ENCODE measurements at regions of chr2 and their contacts with region 1.

Region 1: DNA sequence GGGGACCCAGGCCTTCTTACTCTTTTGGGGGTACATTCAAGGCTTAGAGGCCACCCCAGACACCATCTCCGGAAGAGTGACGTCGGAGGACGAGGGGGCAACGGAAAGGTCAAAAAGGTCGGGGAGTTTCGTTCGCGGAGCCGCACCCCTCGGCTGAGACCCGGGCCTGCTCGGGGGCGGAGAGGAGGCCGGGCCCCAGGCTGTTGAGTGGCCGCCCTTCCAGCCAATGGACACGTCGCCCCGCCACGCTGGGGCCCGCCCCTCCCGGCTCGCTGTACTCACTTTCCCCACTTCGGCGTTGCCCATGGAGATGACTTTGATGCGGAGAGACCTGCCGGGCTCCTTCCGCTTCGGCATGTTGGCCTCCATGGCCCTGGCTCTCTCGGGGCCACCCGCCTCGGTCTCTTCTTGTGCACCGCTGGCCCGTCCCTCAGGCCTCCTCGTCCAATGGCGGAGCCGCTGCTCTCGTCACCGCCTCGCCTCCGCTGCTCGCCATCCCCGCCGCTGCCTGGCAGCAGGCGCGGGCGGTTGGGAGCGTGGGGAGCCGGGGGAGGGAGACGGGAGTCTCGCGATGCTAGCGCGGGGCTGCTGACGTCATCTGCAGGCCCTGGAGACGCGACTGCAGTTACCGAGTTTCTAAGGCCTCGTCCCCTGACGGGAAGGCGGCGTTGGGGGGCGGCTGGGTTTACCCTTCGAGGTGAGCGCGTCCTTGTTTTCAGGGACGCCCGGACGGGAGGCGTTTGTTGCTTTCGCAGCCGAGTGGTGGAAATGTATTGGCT is at the start of gene DNAJC27:
- DNase-seq: peak; percentile 95 to 100 (median 99)

Region 2: DNA sequence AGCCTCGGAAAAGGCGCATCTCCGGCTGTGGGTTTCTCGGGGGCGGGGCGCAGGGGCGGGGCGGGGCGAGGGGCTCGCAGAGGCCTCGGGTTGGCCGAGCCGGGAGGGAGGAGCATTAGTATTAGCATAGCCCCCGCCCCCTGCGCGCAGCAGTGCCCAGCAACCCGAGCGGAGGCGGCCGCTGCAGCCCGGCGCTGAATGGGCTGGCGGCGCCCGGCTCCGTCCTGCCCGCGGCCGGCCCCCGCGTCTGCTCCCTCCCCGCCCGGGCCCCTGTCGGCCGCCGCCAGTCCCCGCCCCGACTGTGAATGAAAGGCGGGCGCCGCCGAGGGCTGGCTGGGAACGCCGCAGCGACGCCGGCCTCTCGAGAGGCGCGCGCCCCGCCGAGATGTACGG is 70.2 kb after region 1 on chr2 and contains the start of gene EFR3B:
- intact Hi-C with region 1: loop called (anchors 5 kb)
- DNase-seq: peak; percentile 91 to 99 (median 97)

Region 3: GRCh38 chr2:25063876-25064660 is 92.3 kb after region 1 on chr2:
- intact Hi-C with region 1: loop called (anchors 5 kb)
- DNase-seq: peak in 41 of 42 donors; percentile 28 to 82 (median 61)

Region 4: DNA sequence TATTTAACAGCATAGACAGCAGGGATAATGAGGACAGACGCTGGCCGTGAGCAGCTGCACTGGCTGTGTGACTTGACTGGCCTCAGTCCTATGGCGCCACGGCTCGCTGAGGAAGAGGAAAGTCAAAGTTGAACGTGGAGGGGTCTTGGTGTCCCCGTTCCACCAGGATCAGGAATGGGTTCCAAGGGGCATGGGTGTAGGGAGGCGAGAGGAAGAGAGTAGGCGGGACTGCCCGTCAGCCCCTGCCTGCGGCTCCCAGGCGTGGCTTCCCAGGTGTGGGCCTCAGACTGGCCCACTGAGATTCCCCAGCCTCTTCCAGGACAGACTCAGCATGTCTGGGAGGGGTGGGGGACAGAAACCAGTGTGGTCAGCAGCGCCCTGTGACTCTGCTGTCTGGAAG is 145.2 kb after region 1 on chr2:
- intact Hi-C with region 1: no loop called
- DNase-seq: no peak

Region 5: GRCh38 chr2:25127646-25128045 is 155.9 kb after region 1 on chr2:
- intact Hi-C with region 1: loop called (anchors 2 kb)
- DNase-seq: peak in 39 of 42 donors; percentile 30 to 88 (median 64)

Region 6: DNA sequence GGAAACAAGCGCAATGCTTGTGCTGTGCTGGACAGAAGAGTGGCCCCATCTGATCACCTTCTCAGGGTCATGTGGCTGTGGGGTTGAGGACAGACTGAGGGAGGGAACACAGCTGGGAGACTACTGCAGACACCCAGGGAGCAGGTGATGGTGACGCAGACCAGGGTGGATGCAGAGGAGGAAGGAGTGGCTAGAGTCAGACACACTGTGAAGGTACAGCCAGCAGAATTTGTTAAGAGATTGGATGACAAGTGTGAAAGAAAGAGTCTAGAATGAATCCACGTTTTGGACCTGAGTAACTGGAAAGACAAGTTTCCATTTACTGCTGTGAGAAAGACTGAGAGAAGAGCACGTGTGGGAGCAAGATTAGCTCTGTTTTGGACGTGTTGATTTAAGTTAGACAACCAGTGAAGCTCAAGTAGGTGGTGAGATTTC is 212.6 kb after region 1 on chr2:
- intact Hi-C with region 1: no loop called
- DNase-seq: no peak

Region 7: GRCh38 chr2:25197336-25198208 is 225.8 kb after region 1 on chr2:
- intact Hi-C with region 1: loop called (anchors 10 kb)
- DNase-seq: peak in 2 of 42 donors; percentile 28 to 32

Measured in head of caudate nucleus (tissue), 42 donors.